ENCODE measurements at regions of chr6 and their contacts with region 1.

Region 1: DNA sequence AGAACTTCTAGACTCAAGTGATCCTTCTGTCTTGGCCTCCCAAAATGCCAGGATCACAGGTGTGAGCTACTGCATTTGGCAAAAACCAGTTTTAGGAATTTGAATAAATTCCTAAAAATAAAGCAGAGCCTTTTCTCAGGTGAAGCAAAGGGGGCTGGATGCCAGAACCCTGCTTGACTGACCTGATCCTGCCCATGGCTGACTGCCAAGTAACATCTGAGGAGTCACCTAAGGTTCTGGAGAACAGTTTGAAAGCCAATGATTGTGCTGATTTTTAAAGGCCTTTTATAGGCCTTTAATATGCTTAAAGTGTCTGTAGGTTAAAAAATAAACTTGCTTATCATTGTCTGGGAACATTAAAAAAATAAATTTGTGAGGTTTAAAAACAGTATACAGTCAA is 14.1 kb upstream of the ZSCAN12 start:
- DNase-seq: no peak
- ATAC-seq: no peak
- H3K4me3 Mint-ChIP-seq: no peak overlapping the region
- H3K27ac Mint-ChIP-seq: no peak overlapping the region
- H3K4me1 Mint-ChIP-seq: no peaks in the 10 kb centered on the region
- H3K27me3 Mint-ChIP-seq: peaks cover 21% of the 10 kb centered on the region
- CTCF ChIP-seq: no peak

Region 2: DNA sequence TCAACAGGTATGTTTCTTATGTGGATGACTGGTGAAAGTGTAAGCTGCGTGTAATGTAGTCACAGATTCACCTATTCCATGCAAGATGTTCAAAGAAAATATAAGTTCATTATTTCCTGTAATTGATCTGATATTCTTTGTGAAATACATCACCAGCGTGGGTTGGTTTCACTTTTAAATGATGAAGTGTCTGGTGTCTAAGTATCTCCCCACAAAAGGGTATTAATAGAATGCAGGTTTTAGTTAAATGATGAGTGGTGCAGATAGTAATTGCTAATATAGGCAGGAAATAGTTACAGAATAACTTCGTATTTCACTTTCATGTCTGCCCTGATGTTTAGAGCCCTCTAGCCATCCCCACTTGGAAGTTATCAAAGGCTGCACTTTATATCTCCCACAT is 110.1 kb before region 1 on chr6:
- CTCF ChIA-PET with region 1: no interaction called
- POLR2A ChIA-PET with region 1: interaction called, 10 read pairs
- intact Hi-C with region 1: no loop called
- DNase-seq: no peak
- ATAC-seq: no peak
- H3K4me3 Mint-ChIP-seq: no peak overlapping the region
- H3K27ac Mint-ChIP-seq: no peak overlapping the region
- H3K4me1 Mint-ChIP-seq: peaks cover 5% of the 10 kb centered on the region
- H3K27me3 Mint-ChIP-seq: no peaks in the 10 kb centered on the region
- CTCF ChIP-seq: no peak

Measured in activated B cell treated with CpG ODN at 0.5 μM for 24 hours (primary cell).